ENCODE measurements at regions of chr9 and their contacts with region 1.

Region 1: DNA sequence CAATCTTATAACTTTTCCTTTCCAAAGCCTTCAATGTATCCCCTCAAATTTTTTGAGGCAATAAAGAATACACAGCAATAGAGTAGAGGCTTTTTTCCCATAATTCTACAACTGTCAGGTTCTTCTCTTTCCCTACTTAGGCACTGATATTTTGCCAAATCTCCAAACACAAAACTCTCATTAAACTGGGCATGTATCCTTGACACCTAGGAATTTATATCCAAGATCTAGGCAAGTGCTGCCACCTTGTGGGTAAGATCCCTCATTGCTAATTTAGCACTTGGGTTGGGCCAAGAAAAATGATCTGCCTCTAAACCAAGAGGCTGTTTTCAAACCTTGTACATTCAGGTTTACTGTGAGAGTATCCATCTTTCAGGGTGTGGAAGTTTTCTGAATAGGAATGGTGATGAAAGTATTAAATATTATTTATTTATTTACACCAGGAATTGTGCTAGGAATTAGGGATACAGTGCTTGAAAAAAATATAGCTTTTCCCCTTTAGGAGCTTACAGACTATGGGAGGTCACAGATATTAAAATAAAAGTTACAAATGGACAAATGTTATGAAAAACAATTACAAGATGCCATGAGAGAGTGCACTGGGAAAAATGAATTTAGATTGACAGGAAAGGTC is 17.6 kb downstream of the TSTD2 start:
- DNase-seq: peak; percentile 63 to 83 (median 75)
- H3K4me3 ChIP-seq: no peak overlapping the region
- H3K27ac ChIP-seq: no peak overlapping the region
- H3K4me1 ChIP-seq: no peaks in the 10 kb centered on the region
- H3K27me3 ChIP-seq: no peaks in the 10 kb centered on the region

Region 2: DNA sequence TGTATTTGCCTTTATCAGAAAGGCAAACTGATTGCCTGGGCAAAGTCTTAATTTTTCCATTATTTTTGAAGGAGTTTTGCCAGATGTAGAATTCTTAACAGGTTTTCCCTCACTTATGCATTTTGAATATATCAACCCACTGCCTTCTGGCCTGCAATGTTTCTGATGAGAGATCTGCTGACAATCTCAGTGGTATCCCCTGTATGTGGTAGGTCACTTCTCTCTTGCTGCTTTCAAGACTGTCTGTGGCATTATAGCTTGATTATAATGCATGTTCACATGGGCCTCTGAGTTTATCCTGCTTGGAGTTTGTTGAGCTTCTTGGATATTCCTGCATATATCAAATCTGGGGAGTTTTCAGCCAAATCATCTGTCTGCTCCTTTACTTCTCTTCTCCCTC is 1083.4 kb before region 1 on chr9:
- CTCF ChIA-PET with region 1: no interaction called
- POLR2A ChIA-PET with region 1: no interaction called
- DNase-seq: no peak
- H3K4me3 ChIP-seq: no peak overlapping the region
- H3K27ac ChIP-seq: no peak overlapping the region
- H3K4me1 ChIP-seq: no peaks in the 10 kb centered on the region
- H3K27me3 ChIP-seq: no peaks in the 10 kb centered on the region

Region 3: GRCh38 chr9:97459099-97459725 is 156.3 kb before region 1 on chr9:
- CTCF ChIA-PET with region 1: interaction called, 22 read pairs
- POLR2A ChIA-PET with region 1: no interaction called
- DNase-seq: no peak
- H3K4me3 ChIP-seq: no peak overlapping the region
- H3K27ac ChIP-seq: no peak overlapping the region
- H3K4me1 ChIP-seq: no peaks in the 10 kb centered on the region
- H3K27me3 ChIP-seq: no peaks in the 10 kb centered on the region

Region 4: GRCh38 chr9:97628668-97629067 is 13.1 kb after region 1 on chr9:
- CTCF ChIA-PET with region 1: interaction called, 10 read pairs
- POLR2A ChIA-PET with region 1: interaction called, 4 read pairs
- DNase-seq: no peak
- H3K4me3 ChIP-seq: no peak overlapping the region
- H3K27ac ChIP-seq: no peak overlapping the region
- H3K4me1 ChIP-seq: peaks cover 8 to 15% (median 11%) of the 10 kb centered on the region in 4 experiments
- H3K27me3 ChIP-seq: no peaks in the 10 kb centered on the region

Measured in common myeloid progenitor, CD34-positive (primary cell).